Prostate gland (tissue), 2 donors: ENCODE measurements at regions of chr3 and their contacts with region 1.

Region 1: GRCh38 chr3:11803977-11804892 is 42.5 kb downstream of the TAMM41 start:
- DNase-seq: peak; percentile 25
- H3K4me3 ChIP-seq: no peak overlapping the region
- H3K27ac ChIP-seq: peak overlapping the region in 1 of 2 donors; percentile 45
- H3K4me1 ChIP-seq: no peaks in the 10 kb centered on the region
- H3K27me3 ChIP-seq: no peaks in the 10 kb centered on the region
- CTCF ChIP-seq: peak in 3 of 4 experiments; percentile 40 to 78 (median 72)
- POLR2A ChIP-seq: no peak

Region 2: GRCh38 chr3:11379824-11380701 is 424.2 kb before region 1 on chr3:
- intact Hi-C with region 1: loop called (anchors 5 kb)
- DNase-seq: no peak
- H3K4me3 ChIP-seq: no peak overlapping the region
- H3K27ac ChIP-seq: peak overlapping the region in 1 of 2 donors; percentile 23
- H3K4me1 ChIP-seq: no peaks in the 10 kb centered on the region
- H3K27me3 ChIP-seq: no peaks in the 10 kb centered on the region
- CTCF ChIP-seq: no peak
- POLR2A ChIP-seq: no peak

Region 3: GRCh38 chr3:11915621-11916424 is 111.6 kb after region 1 on chr3:
- intact Hi-C with region 1: no loop called
- DNase-seq: no peak
- H3K4me3 ChIP-seq: no peak overlapping the region
- H3K27ac ChIP-seq: no peak overlapping the region
- H3K4me1 ChIP-seq: no peaks in the 10 kb centered on the region
- H3K27me3 ChIP-seq: no peaks in the 10 kb centered on the region
- CTCF ChIP-seq: no peak
- POLR2A ChIP-seq: no peak